ENCODE measurements at regions of chr17 and their contacts with region 1.

Region 1: DNA sequence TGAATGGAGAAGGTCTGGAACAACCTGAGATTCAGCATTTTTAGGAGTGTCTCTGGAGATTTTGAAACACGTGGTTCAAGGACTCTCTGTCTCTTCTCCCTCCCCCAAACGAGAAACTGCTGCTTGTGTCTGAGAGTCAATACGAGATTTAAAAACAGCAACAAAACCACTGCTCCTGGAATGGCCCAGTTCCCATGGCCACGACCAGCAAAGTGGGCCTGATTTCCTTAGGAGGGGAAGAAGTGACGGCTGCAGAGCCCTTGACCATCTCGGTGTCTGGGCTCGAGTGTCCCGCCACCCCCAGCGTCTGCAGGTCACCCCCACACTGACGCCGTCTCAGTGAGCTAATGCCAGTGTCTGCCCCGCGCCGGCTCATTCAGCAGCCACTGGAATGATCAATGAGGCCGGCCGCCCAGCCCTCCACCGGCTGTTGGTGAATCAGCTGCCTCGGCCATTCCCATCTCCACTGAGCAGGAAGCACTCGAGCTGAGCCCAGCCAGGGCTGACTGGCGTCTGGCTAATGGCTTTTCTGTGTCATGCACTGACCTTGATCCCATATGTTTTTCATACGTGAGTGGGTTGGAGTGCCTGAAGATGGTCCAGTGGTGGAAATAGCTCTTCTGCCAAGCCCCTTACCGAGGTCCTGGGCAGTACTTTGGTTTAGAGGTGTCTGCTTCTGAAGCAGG is 151.8 kb downstream of the PITPNC1 start:
- DNase-seq: no peak
- ATAC-seq: no peak
- H3K4me3 ChIP-seq: no peak overlapping the region
- H3K4me3 Mint-ChIP-seq: no peak overlapping the region
- H3K27ac ChIP-seq: no peak overlapping the region
- H3K27ac Mint-ChIP-seq: no peak overlapping the region
- H3K4me1 ChIP-seq: peaks cover 0 to 17% of the 10 kb centered on the region in 2 experiments
- H3K4me1 Mint-ChIP-seq: peaks cover 26 to 48% (median 41%) of the 10 kb centered on the region in 3 donors
- H3K27me3 ChIP-seq: no peaks in the 10 kb centered on the region
- H3K27me3 Mint-ChIP-seq: no peaks in the 10 kb centered on the region

Region 2: DNA sequence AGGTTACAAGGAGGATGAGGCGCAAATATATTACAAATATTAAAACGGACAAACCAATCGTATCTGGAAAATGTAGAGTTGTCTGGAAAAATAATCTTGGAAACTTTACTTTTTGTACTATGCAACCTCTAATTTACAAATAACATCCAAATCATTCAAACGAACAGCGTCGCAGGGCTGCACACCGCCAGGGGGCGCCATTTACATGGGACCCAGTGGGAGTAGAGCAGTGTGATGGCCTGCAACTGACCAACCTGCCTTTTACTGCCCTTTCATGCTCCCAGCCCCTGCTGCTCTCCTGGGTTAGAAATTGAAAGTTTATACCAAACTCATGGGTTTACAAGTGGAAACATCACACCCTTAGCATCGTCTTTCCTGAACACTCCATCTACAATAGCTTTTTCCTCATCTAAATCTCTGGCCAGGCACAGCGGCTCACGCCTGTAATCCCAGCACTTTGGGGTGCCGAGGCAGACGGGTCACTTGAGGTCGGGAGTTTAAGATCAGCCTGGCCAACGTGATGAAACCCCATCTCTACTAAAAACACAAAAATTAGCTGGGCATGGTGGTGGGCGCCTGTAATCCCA is 141.8 kb before region 1 on chr17:
- CTCF ChIA-PET with region 1: interaction called in 1 of 2 experiments, 11 read pairs
- POLR2A ChIA-PET with region 1: no interaction called
- DNase-seq: peak in 19 of 35 experiments; percentile 28 to 74 (median 44)
- ATAC-seq: no peak
- H3K4me3 ChIP-seq: no peak overlapping the region
- H3K4me3 Mint-ChIP-seq: peak overlapping the region in 1 of 3 donors; percentile 45
- H3K27ac ChIP-seq: peak overlapping the region; percentile 46
- H3K27ac Mint-ChIP-seq: peak overlapping the region; percentile 93 to 94
- H3K4me1 ChIP-seq: peaks cover 27 to 78% of the 10 kb centered on the region in 2 experiments
- H3K4me1 Mint-ChIP-seq: peaks cover 78 to 84% (median 83%) of the 10 kb centered on the region in 3 donors
- H3K27me3 ChIP-seq: no peaks in the 10 kb centered on the region
- H3K27me3 Mint-ChIP-seq: no peaks in the 10 kb centered on the region